Heart left ventricle (tissue), 16 donors: ENCODE measurements at regions of chr16 and their contacts with region 1.

Region 1: GRCh38 chr16:67372664-67373063 is 20.6 kb downstream of the TPPP3 start:
- DNase-seq: no peak
- ATAC-seq: no peak
- H3K4me3 ChIP-seq: no peak overlapping the region
- H3K27ac ChIP-seq: no peak overlapping the region
- H3K4me1 ChIP-seq: no peaks in the 10 kb centered on the region
- H3K27me3 ChIP-seq: peaks cover 0 to 6% (median 0%) of the 10 kb centered on the region in 9 donors
- CTCF ChIP-seq: peak in 11 of 12 donors; percentile 27 to 59 (median 50)
- POLR2A ChIP-seq: no peak

Region 2: GRCh38 chr16:67415872-67416793 is 43.5 kb after region 1 on chr16 and contains the start of gene ZDHHC1:
- intact Hi-C with region 1: loop called in 2 of 10 experiments (anchors 1 to 5 kb)
- DNase-seq: peak; percentile 72 to 88 (median 84)
- ATAC-seq: peak; percentile 79 to 98 (median 96)
- H3K4me3 ChIP-seq: peak within 1 kb of the TSS; percentile 44 to 96 (median 86)
- H3K27ac ChIP-seq: peak within 1 kb of the TSS; percentile 35 to 92 (median 82)
- H3K4me1 ChIP-seq: peaks cover 0 to 28% (median 12%) of the 10 kb centered on the region in 12 donors
- H3K27me3 ChIP-seq: no peaks in the 10 kb centered on the region
- CTCF ChIP-seq: peak; percentile 30 to 71 (median 56)
- POLR2A ChIP-seq: peak in 1 of 2 donors; percentile 68
- total RNA-seq, gene ZDHHC1: 3.5 to 11.6 (median 5.4) TPM

Region 3: DNA sequence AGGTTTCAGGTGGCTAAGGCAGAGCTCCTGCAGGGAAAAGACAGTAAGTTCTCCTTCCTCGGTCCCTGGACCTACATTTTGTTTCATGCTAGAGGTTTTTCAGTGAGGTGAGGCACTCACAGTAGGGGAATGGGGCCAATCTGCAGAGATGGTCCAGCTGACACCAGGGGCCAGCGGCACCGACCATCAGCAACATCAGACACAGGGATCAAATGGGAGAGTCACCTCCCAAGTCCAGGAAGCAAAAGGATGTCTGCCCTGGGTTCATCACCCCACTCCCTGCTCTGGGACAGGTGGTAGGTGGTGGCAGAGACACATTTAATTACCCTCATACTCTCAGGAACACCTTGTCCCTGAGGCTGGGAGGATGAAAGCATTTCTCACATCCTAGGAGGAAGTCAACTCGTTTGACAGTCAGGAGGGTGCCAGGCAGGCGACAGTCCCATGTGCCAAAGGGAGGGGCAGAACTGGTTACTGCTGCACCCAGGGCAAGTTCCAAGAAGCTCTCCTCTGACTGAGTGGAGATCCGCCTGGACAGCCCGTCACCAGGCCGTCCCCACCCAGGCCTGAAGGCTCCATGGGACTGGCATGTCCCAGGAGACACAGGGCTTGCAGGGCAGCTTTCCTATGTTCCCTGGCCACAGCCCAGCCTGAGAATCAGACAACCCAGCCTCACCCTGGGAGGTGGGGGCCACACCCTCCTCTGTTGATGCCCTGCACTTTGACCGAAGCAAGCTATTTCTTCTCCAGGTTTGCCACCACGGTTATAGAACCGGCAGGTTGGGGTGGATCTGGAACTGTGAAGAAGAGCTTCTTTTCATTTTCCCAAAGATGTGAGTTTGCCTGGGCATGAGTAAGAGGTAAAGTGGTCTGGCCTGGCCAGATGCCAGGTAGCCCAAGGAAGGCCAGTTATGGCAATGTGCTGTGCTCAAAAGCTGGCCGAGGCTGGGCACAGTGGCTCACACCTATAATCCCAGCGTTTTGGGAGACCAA is 89.2 kb after region 1 on chr16:
- intact Hi-C with region 1: loop called in 7 of 10 experiments (anchors 5 to 10 kb)
- DNase-seq: no peak
- ATAC-seq: no peak
- H3K4me3 ChIP-seq: no peak overlapping the region
- H3K27ac ChIP-seq: no peak overlapping the region
- H3K4me1 ChIP-seq: peaks cover 24 to 94% (median 84%) of the 10 kb centered on the region in 12 donors
- H3K27me3 ChIP-seq: no peaks in the 10 kb centered on the region
- CTCF ChIP-seq: no peak
- POLR2A ChIP-seq: no peak

Region 4: GRCh38 chr16:67470359-67470758 is 97.7 kb after region 1 on chr16:
- intact Hi-C with region 1: loop called in 6 of 10 experiments (anchors 2 to 10 kb)
- DNase-seq: peak; percentile 88 to 96 (median 92)
- ATAC-seq: peak; percentile 88 to 94 (median 90)
- H3K4me3 ChIP-seq: no peak overlapping the region
- H3K27ac ChIP-seq: peak overlapping the region in 3 of 12 donors; percentile 0 to 31 (median 25)
- H3K4me1 ChIP-seq: peaks cover 0 to 78% (median 45%) of the 10 kb centered on the region in 12 donors
- H3K27me3 ChIP-seq: no peaks in the 10 kb centered on the region
- CTCF ChIP-seq: no peak
- POLR2A ChIP-seq: no peak